Breast epithelium (tissue), 4 donors: ENCODE measurements at regions of chr4 and their contacts with region 1.

Region 1: DNA sequence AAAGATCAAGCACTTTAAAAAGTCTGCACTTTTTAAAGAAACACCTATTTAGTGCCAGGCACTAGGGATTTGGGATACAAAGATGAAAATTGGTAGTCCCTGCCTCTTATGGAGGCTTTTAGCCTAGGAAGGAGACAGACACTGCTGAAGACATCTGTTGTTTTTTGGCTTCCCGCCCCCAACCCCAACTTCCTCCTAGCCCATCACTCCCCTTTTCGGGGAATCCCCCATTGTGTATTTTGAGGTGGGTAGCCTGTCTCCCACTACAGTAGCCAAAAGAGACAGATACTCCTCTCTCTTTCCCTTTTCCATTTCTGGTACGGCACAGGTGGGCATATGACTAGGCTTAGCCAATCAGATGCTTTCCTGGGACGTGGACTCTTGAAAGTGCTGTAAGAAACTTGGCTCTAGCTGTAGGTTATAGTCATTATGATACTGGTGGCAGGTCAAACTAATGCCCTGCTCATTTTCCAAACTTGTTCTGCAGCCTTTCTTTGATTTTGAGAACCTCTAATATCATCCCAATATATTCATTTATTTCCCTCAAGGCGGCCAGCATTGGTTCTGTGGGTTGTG is 194.6 kb upstream of the RBPJ start:
- DNase-seq: no peak
- H3K4me3 ChIP-seq: no peak overlapping the region
- H3K27ac ChIP-seq: no peak overlapping the region
- H3K4me1 ChIP-seq: no peaks in the 10 kb centered on the region
- H3K27me3 ChIP-seq: no peaks in the 10 kb centered on the region
- CTCF ChIP-seq: no peak
- POLR2A ChIP-seq: no peak

Region 2: GRCh38 chr4:26076000-26076587 is 50.1 kb before region 1 on chr4:
- intact Hi-C with region 1: loop called (anchors 2 kb)
- DNase-seq: no peak
- H3K4me3 ChIP-seq: no peak overlapping the region
- H3K27ac ChIP-seq: peak overlapping the region in 1 of 2 donors; percentile 56
- H3K4me1 ChIP-seq: no peaks in the 10 kb centered on the region
- H3K27me3 ChIP-seq: no peaks in the 10 kb centered on the region
- CTCF ChIP-seq: no peak
- POLR2A ChIP-seq: no peak